ENCODE measurements at regions of chr11 and their contacts with region 1.

Region 1: DNA sequence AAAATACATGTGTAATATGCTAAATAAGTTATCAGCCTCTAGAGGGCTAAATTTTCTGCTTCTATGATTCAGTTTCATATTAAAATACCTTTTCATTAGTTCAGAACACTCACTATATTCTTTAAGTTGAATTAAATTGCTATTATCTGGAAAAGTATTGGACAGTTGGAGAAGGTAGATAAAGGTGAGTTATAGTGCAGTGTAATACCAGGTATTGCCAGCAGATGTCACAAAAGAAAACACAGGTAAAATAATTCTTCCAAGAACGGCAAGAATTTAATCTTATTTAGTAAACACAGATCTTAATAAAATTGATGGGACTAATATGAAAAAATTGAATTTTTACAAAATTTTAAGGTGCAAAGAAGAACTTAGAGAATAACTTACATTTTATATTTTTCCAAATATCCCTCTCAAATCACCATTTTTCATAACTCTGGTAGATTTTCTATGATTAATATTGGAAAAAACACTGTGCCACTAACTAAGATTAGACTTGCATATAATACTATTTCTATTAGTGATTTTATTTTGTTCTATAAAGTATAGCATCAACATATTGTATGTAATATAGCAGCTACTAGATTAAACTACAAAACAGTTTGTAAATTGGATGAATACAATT is 1.7 kb upstream of the LRRC4C start:
- DNase-seq: no peak
- CTCF ChIP-seq: peak; percentile 38

Region 2: DNA sequence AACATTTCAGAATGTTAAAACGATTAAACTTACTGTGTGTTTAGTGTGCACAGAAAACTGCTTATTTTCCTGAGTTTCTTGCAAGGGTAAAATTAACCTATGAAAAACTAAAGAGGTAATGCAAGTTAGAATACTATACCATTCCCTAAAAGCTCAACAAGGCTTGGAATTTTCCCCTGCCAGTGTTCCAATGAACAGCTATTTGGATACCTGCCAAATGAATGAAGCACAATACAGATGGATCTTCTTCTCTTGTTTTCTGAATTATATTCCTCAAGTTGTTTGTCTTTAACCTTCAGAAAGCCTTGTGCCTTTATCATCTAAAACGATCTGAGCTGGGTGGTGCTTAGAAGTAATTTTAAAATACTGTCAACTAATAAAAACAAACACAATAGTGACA is 206.2 kb before region 1 on chr11:
- in situ Hi-C with region 1: no loop called
- DNase-seq: no peak
- CTCF ChIP-seq: no peak

Region 3: DNA sequence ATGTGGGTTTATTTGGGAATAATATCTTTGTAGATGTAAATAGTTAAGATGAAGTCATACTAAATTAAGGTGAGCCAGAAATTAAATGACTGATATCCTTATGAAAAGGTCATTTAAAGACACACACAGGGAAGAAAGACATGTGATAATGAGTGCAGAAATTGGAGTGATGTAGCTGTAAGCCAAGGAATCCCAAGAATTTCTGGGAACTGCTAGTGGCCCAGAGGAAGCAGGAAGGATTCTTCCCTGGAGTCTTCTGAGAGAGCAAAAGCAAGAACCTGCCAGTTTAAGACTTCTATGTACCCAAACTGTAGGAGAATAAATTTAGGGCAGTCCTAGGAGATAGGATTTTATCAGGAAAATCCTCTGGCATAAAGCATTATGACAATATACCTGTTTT is 68.6 kb before region 1 on chr11:
- in situ Hi-C with region 1: no loop called
- DNase-seq: no peak
- CTCF ChIP-seq: no peak

Region 4: DNA sequence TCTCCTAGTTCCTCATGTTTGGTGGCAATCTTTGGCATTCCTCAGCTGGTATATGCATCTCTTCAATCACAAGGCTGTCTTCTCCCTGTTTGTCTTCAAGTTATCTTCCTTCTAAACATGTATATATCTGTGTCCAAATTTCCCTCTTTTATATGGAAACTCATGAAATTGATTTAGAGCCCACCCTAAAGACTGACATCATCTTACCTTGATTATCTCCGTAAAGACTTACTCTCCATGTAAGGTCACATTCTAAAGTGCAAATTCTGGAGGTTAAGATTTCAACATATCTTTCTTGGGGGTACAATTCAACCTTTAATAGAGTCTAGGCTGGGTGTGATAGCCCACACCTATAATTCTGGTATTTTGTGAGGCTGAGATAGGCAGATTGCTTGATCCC is 214.0 kb after region 1 on chr11:
- in situ Hi-C with region 1: no loop called
- DNase-seq: no peak
- CTCF ChIP-seq: no peak

Region 5: GRCh38 chr11:42524534-42525227 is 1063.5 kb after region 1 on chr11:
- in situ Hi-C with region 1: loop called (anchors 25 kb)
- DNase-seq: peak; percentile 32
- CTCF ChIP-seq: peak; percentile 68

Region 6: GRCh38 chr11:43282607-43283440 is 1821.7 kb after region 1 on chr11:
- in situ Hi-C with region 1: loop called (anchors 25 kb)
- DNase-seq: peak; percentile 61
- CTCF ChIP-seq: peak; percentile 81